Activated CD8-positive, alpha-beta T cell treated with anti-CD3 and anti-CD28 coated beads for 36 hours (primary cell): ENCODE measurements at regions of chr3 and their contacts with region 1.

Region 1: GRCh38 chr3:141738022-141738890 is at the start of gene RNF7:
- DNase-seq: peak; percentile 97
- ATAC-seq: peak; percentile 96
- H3K4me3 Mint-ChIP-seq: peak within 1 kb of the TSS; percentile 82
- H3K27ac Mint-ChIP-seq: peak within 1 kb of the TSS; percentile 98
- H3K4me1 Mint-ChIP-seq: peaks cover 33% of the 10 kb centered on the region
- H3K27me3 Mint-ChIP-seq: no peaks in the 10 kb centered on the region
- CTCF ChIP-seq: peak; percentile 88
- total RNA-seq, gene RNF7: 56.1 to 57.9 TPM

Region 2: DNA sequence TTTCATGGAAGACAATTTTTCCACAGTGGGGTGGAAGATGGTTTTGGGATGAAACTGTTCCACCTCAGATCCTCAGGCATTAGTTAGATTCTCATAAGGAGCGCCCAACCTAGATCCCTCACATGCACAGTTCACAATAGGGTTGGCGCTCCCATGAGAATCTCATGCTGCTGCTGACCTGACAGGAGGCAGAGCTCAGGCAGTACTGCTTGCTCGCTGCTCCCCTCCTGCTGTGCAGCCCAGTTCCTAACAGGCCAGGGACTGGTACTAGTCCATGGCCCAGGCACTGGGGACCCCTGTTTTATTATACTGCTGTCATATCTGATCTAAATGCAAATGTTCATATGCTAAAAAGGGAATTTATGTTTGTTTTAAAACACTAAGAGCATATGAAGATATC is 15.1 kb after region 1 on chr3:
- CTCF ChIA-PET with region 1: interaction called, 18 read pairs
- POLR2A ChIA-PET with region 1: interaction called, 6 read pairs
- intact Hi-C with region 1: no loop called
- DNase-seq: no peak
- ATAC-seq: no peak
- H3K4me3 Mint-ChIP-seq: no peak overlapping the region
- H3K27ac Mint-ChIP-seq: no peak overlapping the region
- H3K4me1 Mint-ChIP-seq: no peaks in the 10 kb centered on the region
- H3K27me3 Mint-ChIP-seq: no peaks in the 10 kb centered on the region
- CTCF ChIP-seq: no peak

Region 3: DNA sequence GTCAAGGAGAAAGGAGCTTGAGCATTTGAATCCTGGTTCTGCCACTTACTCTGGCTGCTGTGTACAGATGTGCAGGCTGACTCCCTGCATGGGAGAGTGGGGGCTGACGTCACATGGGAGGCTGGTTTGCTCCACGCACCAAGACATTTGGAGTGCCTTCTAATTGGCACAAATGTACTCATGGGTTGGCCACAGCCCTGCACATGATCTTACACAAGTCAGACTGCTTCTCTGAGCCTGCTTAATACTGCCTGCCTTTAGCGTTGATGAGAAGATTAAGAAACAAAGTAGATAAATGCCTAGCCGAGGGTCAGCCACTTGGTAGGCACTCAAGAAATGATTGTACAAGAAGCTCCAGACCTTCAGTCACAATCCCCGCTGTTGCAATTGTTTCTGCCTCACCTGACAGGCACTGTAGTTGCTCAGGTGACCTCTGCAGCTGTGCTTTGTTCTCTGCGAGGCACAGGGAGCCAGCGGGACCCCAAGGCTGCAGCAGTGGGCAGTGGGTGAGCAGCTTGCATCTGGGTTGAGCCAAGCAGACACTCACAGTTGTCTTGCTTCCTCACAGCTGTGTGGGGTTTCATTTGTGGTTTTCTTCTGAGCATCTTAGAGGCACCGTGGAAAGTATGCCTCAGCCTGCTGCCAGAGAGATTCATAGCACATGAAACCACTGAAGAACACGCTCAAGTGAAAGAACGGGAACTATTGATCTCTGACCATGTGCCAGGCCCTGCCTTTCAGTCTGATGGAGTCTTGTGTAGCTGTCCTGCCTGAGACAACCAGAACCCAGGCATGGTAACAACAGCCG is 58.0 kb after region 1 on chr3:
- CTCF ChIA-PET with region 1: interaction called, 15 read pairs
- POLR2A ChIA-PET with region 1: interaction called, 19 read pairs
- intact Hi-C with region 1: loop called (anchors 1 kb)
- DNase-seq: peak; percentile 94
- ATAC-seq: peak; percentile 80
- H3K4me3 Mint-ChIP-seq: peak overlapping the region; percentile 85
- H3K27ac Mint-ChIP-seq: peak overlapping the region; percentile 99
- H3K4me1 Mint-ChIP-seq: peaks cover 51% of the 10 kb centered on the region
- H3K27me3 Mint-ChIP-seq: no peaks in the 10 kb centered on the region
- CTCF ChIP-seq: no peak

Region 4: DNA sequence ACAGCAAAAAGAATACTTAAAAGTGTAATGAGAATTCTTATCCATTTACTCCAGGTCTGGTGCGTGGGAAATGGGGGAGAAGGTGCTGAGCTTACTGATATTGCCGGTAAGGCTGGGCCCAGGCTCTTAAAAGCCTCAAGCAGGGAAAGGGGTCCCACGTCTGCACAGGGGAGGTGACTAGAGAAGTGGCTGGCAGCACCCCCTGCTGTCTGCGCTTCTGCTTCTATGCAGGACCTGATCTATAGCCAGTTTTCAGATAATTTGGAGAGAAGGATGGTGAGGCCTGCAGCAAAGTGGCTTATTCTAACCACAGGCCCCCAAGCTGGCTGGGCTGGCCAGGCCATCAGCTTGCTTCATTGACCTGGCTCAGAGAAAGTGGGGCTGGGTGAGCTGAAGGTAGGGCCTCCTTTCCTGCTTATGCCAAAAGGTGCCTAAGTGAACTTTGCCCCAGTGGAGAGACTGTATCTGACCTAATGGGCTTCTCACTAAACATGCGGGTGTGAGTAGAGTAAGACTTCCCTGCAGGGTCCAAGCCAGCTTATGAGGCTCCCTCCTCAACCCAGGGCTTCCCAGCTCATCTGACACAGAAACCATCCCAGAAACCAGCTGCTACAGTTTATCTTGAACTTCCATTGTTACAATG is 107.3 kb after region 1 on chr3:
- CTCF ChIA-PET with region 1: interaction called, 25 read pairs
- POLR2A ChIA-PET with region 1: no interaction called
- intact Hi-C with region 1: no loop called
- DNase-seq: peak; percentile 74
- ATAC-seq: peak; percentile 71
- H3K4me3 Mint-ChIP-seq: no peak overlapping the region
- H3K27ac Mint-ChIP-seq: no peak overlapping the region
- H3K4me1 Mint-ChIP-seq: peaks cover 10% of the 10 kb centered on the region
- H3K27me3 Mint-ChIP-seq: peaks cover 3% of the 10 kb centered on the region
- CTCF ChIP-seq: peak; percentile 30

Region 5: GRCh38 chr3:141875374-141875892 is 137.2 kb after region 1 on chr3:
- CTCF ChIA-PET with region 1: interaction called, 53 read pairs
- POLR2A ChIA-PET with region 1: interaction called, 30 read pairs
- intact Hi-C with region 1: loop called (anchors 1 kb)
- DNase-seq: peak; percentile 91
- ATAC-seq: peak; percentile 73
- H3K4me3 Mint-ChIP-seq: peak overlapping the region; percentile 95
- H3K27ac Mint-ChIP-seq: peak overlapping the region; percentile 95
- H3K4me1 Mint-ChIP-seq: peaks cover 25% of the 10 kb centered on the region
- H3K27me3 Mint-ChIP-seq: no peaks in the 10 kb centered on the region
- CTCF ChIP-seq: peak; percentile 87

Region 6: DNA sequence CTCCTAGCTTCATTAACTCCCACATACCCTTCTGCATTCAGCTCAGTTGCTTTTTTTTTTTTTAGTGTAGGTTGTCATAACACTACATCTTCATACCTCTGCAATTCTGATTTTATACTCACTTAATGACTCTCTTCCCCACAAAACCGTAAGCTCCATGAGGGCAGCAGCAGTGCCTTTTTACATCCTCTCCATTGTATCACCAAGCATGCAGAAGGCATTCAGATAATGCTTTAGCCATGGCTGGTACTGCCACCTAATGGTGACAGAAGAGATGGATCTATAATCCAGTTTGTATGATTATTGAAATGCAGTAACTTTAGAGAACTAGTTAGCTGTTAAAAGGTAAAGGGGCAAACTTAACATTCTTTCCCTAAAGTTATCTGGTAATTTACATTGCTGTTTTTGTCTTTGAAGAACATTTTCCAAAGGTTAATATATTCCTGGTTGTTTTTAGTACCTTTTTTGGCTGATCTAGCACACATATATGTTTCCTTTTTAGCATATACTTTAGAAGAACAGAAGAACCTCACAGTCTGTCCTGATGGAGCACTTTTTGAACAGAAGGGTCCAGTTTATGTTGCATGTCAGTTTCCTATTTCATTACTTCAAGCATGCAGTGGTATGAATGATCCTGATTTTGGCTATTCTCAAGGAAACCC is 175.0 kb after region 1 on chr3:
- CTCF ChIA-PET with region 1: interaction called, 14 read pairs
- POLR2A ChIA-PET with region 1: interaction called, 8 read pairs
- intact Hi-C with region 1: loop called (anchors 2 kb)
- DNase-seq: peak; percentile 67
- ATAC-seq: peak; percentile 80
- H3K4me3 Mint-ChIP-seq: no peak overlapping the region
- H3K27ac Mint-ChIP-seq: peak overlapping the region; percentile 6
- H3K4me1 Mint-ChIP-seq: peaks cover 4% of the 10 kb centered on the region
- H3K27me3 Mint-ChIP-seq: no peaks in the 10 kb centered on the region
- CTCF ChIP-seq: peak; percentile 70